ENCODE measurements at regions of chr5 and their contacts with region 1.

Region 1: DNA sequence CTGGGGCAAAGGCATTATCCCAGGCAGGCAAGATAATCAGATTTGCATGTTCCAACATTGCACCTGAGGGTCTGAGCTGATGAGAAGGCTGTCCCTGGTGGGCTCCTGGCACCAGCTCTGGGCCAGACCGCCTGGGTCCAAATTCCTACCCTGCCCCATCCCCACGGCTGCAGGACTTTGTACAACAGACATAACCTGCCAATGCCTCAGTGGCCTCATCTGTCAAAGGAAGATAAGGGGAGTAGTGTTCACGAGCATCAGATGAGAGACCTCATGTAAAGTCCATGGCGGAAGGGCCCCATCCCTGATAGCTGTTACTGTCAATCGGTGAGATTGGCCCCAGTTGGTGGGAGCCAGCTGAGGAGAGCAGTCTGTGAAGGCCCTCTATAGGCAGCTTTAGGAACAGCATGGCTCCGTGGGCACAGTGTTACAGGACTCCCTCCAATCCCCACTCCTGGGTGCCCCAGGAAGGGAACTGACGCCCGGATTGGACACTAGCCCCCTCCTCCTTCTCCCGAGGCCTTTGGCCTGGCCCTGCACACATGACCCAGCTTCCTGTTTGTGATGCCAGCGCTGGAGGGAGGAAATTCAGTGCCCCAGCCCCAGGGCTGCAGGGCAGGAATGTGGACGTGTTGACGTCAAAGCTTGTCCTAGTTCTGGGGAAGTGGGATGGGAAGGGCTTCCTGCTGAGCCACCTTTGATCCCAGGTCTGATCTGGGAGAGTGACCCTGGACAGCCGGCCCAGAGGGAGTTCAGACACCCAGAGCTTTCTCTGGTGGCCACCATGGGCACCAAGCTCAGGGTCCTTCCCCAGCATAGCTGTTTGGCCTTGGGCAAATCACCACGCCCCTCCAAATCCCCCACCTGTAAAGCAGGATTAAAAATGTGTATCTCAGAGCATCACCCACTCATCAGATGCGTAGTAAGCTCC is 56.2 kb downstream of the DUSP1 start:
- DNase-seq: peak; percentile 63 to 83 (median 78)
- ATAC-seq: peak; percentile 62 to 81 (median 80)
- H3K4me3 ChIP-seq: no peak overlapping the region
- H3K27ac ChIP-seq: peak overlapping the region; percentile 3 to 41 (median 26)
- H3K4me1 ChIP-seq: no peaks in the 10 kb centered on the region
- H3K27me3 ChIP-seq: no peaks in the 10 kb centered on the region
- CTCF ChIP-seq: peak; percentile 70 to 84 (median 75)

Region 2: DNA sequence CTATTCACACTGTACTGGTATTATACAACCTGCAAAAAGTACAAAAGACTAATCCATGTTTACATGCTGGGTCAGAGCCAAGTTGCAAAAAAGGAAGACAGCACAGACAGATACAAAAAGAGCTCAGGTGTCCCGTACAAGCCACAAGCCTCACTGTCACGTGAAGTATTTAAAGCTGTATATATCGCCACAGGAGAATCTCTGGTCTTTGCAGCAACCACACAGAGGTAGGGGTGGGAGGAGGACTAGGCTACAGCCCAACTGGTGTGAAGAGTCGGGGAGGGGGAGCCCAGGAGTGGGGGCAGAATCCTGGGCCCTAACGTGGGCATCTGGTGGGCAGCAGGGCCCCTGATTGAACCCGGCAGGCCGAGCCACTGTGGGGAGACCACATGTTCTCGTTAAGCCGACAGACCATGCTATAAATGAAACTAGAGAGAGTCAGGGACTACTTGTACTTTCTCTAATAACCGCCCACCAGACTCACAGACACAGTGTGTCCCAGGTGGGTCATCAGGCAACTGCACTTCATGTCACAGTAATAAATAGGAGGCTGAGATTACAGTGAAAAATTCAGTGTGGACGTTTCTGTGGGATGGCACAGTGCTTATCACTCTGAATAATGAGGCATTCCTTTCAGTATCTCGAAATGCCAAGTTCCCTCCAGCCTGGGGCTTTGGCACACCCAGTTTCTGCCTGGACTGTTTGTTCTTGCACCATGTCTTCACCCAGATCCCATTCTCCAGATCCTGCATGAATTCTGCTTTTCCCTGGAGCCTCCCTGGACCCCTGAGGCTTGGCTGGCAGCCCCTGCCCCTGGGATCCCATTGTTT is 181.1 kb before region 1 on chr5:
- intact Hi-C with region 1: no loop called
- DNase-seq: no peak
- ATAC-seq: peak in 1 of 4 donors; percentile 45
- H3K4me3 ChIP-seq: no peak overlapping the region
- H3K27ac ChIP-seq: no peak overlapping the region
- H3K4me1 ChIP-seq: peaks cover 0 to 7% (median 0%) of the 10 kb centered on the region in 3 donors
- H3K27me3 ChIP-seq: no peaks in the 10 kb centered on the region
- CTCF ChIP-seq: no peak

Region 3: GRCh38 chr5:172594867-172595466 is 119.8 kb before region 1 on chr5:
- intact Hi-C with region 1: no loop called
- DNase-seq: no peak
- ATAC-seq: no peak
- H3K4me3 ChIP-seq: no peak overlapping the region
- H3K27ac ChIP-seq: no peak overlapping the region
- H3K4me1 ChIP-seq: no peaks in the 10 kb centered on the region
- H3K27me3 ChIP-seq: no peaks in the 10 kb centered on the region
- CTCF ChIP-seq: no peak

Region 4: DNA sequence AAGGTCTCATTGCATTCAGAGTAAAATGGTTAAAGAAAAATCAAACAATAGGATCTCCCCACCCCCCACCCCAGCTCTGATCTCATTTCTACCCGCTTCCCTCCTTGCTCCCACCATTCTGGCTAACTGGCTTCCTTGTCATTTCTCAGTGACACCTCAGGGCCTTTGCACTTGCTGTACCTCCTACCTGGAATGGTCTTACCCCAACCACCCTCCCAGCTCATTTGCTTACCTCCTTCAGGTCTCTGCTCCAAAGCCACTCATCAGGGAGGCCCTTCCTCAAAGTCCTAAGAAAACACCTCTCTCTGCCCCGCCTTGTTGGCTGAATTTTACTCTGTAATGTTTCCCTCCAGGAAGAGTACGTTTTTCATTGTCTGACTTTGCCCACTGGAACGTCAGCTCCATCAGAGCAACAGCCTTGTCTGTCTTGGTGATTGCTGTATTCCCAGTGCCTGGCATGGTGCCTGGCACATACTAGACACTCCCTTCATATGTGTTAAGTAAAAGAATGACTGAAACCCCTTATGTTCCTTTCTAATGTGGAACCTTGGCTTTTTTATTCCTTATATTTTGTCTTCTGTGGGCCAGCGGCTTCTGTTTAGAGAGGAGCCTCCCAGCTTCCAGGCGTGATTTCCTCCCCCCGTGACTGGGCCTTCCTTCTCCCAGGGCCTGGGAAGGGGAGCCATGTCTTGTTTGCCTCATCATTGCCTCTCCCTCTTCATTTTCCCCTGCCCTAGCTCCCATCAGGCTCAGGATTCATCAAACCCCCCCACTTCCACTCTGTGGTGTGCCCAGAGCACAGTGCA is 46.8 kb before region 1 on chr5:
- intact Hi-C with region 1: no loop called
- DNase-seq: no peak
- ATAC-seq: no peak
- H3K4me3 ChIP-seq: no peak overlapping the region
- H3K27ac ChIP-seq: no peak overlapping the region
- H3K4me1 ChIP-seq: no peaks in the 10 kb centered on the region
- H3K27me3 ChIP-seq: no peaks in the 10 kb centered on the region
- CTCF ChIP-seq: no peak

Region 5: GRCh38 chr5:172932313-172933017 is 217.7 kb after region 1 on chr5:
- intact Hi-C with region 1: loop called (anchors 2 to 10 kb)
- DNase-seq: peak; percentile 54 to 91 (median 81)
- ATAC-seq: peak; percentile 89 to 99 (median 97)
- H3K4me3 ChIP-seq: no peak overlapping the region
- H3K27ac ChIP-seq: no peak overlapping the region
- H3K4me1 ChIP-seq: no peaks in the 10 kb centered on the region
- H3K27me3 ChIP-seq: no peaks in the 10 kb centered on the region
- CTCF ChIP-seq: peak; percentile 91 to 92 (median 92)